ENCODE measurements at regions of chr15 and their contacts with region 1.

Region 1: DNA sequence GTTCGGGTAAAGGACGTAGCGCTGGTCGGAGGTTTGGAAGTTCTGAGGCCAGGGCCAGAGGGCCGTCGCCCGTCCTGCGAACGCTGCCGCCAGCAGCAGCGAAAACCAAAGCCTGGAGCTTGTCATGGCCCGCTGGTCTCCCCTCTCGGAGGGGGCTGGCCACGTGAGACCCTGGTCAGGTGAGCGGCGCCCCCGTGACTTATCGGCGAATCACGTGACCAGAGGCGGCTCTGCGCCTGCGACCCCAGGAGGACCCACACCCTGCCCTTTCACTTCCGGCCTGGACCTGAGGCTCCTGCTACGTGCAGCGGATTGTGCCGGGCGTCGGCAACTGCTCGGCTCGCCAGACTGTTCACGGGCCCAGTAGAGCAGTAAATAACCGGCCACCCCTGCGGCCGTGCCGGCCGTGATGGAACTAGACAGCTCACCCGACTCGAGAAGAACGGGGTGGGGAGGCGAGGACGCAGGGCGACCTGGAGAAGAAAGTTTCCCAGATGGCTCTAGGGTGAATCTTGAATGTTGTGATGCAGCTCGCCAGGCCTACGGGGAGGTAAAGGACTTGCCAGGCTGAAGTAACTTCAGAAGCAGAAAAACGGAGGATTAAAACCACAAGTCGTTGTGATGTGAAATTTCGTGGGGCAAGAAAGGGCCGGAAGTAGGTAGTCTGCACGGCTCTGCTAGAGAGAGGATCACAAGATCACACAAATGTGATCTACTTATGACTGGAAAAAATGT is at the start of gene HEXA:
- DNase-seq: peak; percentile 91 to 99 (median 95)
- ATAC-seq: peak; percentile 93
- H3K4me3 ChIP-seq: peak within 1 kb of the TSS; percentile 99
- H3K4me3 Mint-ChIP-seq: peak within 1 kb of the TSS; percentile 87 to 96 (median 93)
- H3K27ac ChIP-seq: peak within 1 kb of the TSS; percentile 75
- H3K27ac Mint-ChIP-seq: peak within 1 kb of the TSS; percentile 94 to 100 (median 96)
- H3K4me1 ChIP-seq: peaks cover 21 to 39% of the 10 kb centered on the region in 2 donors
- H3K4me1 Mint-ChIP-seq: peaks cover 39 to 85% (median 64%) of the 10 kb centered on the region in 7 donors
- H3K27me3 ChIP-seq: no peaks in the 10 kb centered on the region
- H3K27me3 Mint-ChIP-seq: no peaks in the 10 kb centered on the region
- total RNA-seq, gene HEXA: 83.1 to 101 (median 94.8) TPM

Region 2: DNA sequence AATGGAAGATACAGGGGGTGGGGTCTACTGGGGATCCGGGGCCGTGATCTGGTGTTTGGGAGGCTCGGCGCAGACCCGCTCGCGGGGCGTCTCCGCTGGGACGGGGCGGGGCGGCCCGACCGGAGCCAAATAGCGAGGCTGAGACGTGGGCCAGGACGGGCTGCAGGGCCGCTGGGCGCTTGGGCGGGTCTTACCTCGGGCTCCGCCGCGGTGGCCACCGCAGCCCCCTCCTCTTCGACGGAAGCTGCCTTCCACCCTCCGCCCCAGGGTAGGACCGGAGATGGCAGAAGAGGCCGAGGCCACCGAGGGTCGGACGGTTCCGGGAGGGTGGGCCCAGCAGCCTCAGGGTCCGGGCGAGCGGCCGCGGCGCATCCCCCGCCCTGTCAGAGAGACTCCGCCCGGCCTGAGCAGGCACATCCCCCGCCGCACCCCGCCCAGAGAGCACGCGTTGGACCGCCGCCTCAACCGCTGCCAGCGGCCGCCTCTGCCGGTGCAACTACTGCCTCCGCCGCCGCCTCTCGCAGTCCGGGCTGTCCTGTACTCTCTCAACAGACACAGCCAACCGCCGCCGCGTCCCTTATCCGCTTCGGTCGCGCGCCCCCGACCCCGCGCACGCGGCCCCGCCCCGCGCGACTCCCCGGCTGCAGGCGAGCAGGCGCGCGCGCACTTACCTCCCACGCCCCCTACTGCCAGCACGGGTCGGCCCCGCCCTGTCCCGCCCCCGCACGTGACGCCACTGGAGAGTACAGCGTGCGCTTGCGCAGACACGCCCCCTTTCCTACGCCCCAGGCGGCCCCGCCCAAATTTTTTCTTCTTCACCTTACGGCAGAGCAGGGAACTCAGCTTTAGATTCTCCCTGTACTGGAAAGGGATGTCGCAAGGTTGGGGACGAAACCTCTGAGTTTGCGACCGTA is 258.3 kb before region 1 on chr15 and contains the start of gene MYO9A:
- CTCF ChIA-PET with region 1: no interaction called
- POLR2A ChIA-PET with region 1: no interaction called
- intact Hi-C with region 1: loop called in 1 of 2 experiments (anchors 1 kb)
- DNase-seq: peak; percentile 93 to 99 (median 98)
- ATAC-seq: peak; percentile 90
- H3K4me3 ChIP-seq: peak within 1 kb of the TSS; percentile 86
- H3K4me3 Mint-ChIP-seq: peak within 1 kb of the TSS; percentile 89 to 99 (median 97)
- H3K27ac ChIP-seq: peak within 1 kb of the TSS; percentile 94
- H3K27ac Mint-ChIP-seq: peak within 1 kb of the TSS; percentile 81 to 99 (median 99)
- H3K4me1 ChIP-seq: peaks cover 7 to 11% of the 10 kb centered on the region in 2 donors
- H3K4me1 Mint-ChIP-seq: peaks cover 23 to 55% (median 47%) of the 10 kb centered on the region in 7 donors
- H3K27me3 ChIP-seq: no peaks in the 10 kb centered on the region
- H3K27me3 Mint-ChIP-seq: peaks cover 0 to 23% (median 0%) of the 10 kb centered on the region in 5 donors
- total RNA-seq, gene MYO9A: 21.6 to 53.3 (median 29.7) TPM

Region 3: DNA sequence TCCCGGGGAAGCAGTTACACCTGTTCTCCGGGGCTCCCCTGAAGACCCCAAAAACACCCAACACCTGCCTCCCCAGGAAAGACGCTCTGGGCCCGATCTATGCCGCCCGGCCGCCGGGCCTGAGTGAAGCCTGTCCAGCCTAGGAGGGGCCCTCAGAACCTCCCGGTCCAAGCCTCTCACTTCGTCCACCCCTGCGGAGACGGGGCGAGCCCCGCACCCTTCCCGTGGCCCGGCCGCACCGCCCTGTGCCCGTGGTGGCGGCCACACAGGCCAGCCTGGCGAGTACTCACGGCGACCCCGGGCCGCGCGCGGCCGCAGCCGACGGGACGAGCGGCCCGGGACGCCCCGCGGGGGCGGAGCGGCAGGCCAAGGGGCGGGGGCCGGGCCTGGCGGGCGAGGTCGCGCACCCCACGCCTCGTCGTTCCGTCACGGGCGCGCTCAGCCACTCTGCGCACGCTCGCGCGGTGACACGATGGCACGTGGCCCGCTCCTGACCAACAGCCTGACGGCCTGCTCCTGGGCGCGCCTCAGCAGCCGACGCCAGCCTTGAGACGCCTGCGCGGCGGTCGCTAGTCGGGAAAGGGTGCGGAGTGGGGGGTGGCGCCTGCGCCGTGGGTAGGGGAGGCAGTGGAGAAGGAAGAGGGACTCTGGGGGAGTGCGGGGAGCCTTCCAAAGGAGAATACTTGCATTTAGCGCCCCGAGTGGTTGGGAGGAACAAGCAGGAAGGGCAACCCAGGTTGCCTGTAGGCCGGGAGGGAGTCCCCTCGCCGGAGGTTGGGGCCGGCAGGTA is 103.6 kb before region 1 on chr15 and contains the start of gene PARP6:
- CTCF ChIA-PET with region 1: no interaction called
- POLR2A ChIA-PET with region 1: interaction called, 9 read pairs
- intact Hi-C with region 1: loop called (anchors 1 kb)
- DNase-seq: peak; percentile 94 to 100 (median 99)
- ATAC-seq: peak; percentile 96
- H3K4me3 ChIP-seq: peak within 1 kb of the TSS; percentile 71
- H3K4me3 Mint-ChIP-seq: peak within 1 kb of the TSS; percentile 87 to 95 (median 90)
- H3K27ac ChIP-seq: peak within 1 kb of the TSS; percentile 90
- H3K27ac Mint-ChIP-seq: peak within 1 kb of the TSS; percentile 87 to 96 (median 93)
- H3K4me1 ChIP-seq: peaks cover 18 to 25% of the 10 kb centered on the region in 2 donors
- H3K4me1 Mint-ChIP-seq: peaks cover 24 to 53% (median 44%) of the 10 kb centered on the region in 7 donors
- H3K27me3 ChIP-seq: no peaks in the 10 kb centered on the region
- H3K27me3 Mint-ChIP-seq: no peaks in the 10 kb centered on the region
- total RNA-seq, gene PARP6: 75.8 to 129 (median 127) TPM

Region 4: DNA sequence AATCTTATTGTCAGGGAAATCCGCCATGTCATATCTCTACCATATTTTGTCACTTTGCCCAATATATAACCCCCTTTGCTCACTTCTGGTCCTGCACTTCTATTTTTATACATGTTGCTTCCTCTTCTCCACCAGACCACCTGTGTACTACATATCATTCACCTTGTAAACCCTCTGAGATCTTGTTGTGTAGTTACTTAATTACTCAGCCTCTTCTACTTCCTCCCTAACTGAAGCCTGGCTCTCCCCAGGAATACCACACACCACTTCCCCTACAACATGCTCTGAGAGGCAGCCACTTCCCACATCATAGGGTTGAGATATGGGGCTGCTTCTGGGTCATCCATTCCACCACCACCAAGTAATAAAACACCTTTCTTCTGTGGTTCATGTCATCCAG is 10.2 kb before region 1 on chr15:
- CTCF ChIA-PET with region 1: no interaction called
- POLR2A ChIA-PET with region 1: interaction called, 7 read pairs
- intact Hi-C with region 1: loop called in 1 of 2 experiments (anchors 1 kb)
- DNase-seq: peak in 5 of 9 donors; percentile 11 to 39 (median 27)
- ATAC-seq: peak; percentile 81
- H3K4me3 ChIP-seq: no peak overlapping the region
- H3K4me3 Mint-ChIP-seq: peak overlapping the region in 9 of 10 donors; percentile 1 to 58 (median 18)
- H3K27ac ChIP-seq: no peak overlapping the region
- H3K27ac Mint-ChIP-seq: peak overlapping the region in 4 of 9 donors; percentile 6 to 44 (median 10)
- H3K4me1 ChIP-seq: peaks cover 0 to 18% of the 10 kb centered on the region in 2 donors
- H3K4me1 Mint-ChIP-seq: peaks cover 27 to 59% (median 46%) of the 10 kb centered on the region in 7 donors
- H3K27me3 ChIP-seq: no peaks in the 10 kb centered on the region
- H3K27me3 Mint-ChIP-seq: no peaks in the 10 kb centered on the region

Region 5: DNA sequence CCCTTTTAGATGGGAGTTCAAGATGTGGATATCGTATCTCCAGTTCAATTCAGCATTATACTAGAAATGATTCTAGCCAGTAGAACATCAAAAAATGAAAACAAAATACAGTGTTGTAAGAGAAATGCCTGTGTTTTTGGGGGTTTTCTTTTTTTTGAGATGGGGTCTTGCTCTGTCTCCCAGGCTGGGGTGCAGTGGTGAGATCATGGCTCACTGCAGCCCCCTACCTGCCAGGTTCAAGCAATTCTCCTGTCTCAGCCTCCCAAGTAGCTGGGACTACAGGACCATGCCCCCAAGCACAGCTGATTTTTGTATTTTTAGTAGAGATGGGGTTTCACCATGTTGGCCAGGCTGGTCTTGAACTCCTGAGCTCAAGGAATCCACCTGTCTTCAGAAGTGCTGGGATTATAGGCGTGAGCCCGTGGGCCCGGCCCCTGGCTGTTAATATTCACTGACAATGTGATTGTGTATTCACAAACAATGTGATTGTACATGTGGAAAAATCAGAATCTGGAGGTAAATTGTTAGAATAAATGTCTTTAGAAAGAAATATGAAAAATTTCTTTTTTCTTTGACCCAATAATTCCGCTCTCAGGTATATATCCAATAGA is 157.1 kb after region 1 on chr15:
- CTCF ChIA-PET with region 1: no interaction called
- POLR2A ChIA-PET with region 1: interaction called, 7 read pairs
- intact Hi-C with region 1: loop called in 1 of 2 experiments (anchors 1 kb)
- DNase-seq: peak in 7 of 9 donors; percentile 6 to 41 (median 30)
- ATAC-seq: peak; percentile 47
- H3K4me3 ChIP-seq: no peak overlapping the region
- H3K4me3 Mint-ChIP-seq: peak overlapping the region in 1 of 10 donors; percentile 58
- H3K27ac ChIP-seq: no peak overlapping the region
- H3K27ac Mint-ChIP-seq: peak overlapping the region in 1 of 9 donors; percentile 41
- H3K4me1 ChIP-seq: peaks cover 0 to 31% of the 10 kb centered on the region in 2 donors
- H3K4me1 Mint-ChIP-seq: peaks cover 27 to 87% (median 70%) of the 10 kb centered on the region in 7 donors
- H3K27me3 ChIP-seq: no peaks in the 10 kb centered on the region
- H3K27me3 Mint-ChIP-seq: no peaks in the 10 kb centered on the region

Region 6: GRCh38 chr15:72790302-72790910 is 414.4 kb after region 1 on chr15:
- CTCF ChIA-PET with region 1: no interaction called
- POLR2A ChIA-PET with region 1: no interaction called
- intact Hi-C with region 1: no loop called
- DNase-seq: no peak
- ATAC-seq: no peak
- H3K4me3 ChIP-seq: no peak overlapping the region
- H3K4me3 Mint-ChIP-seq: no peak overlapping the region
- H3K27ac ChIP-seq: no peak overlapping the region
- H3K27ac Mint-ChIP-seq: no peak overlapping the region
- H3K4me1 ChIP-seq: peaks cover 0 to 5% of the 10 kb centered on the region in 2 donors
- H3K4me1 Mint-ChIP-seq: peaks cover 0 to 17% (median 0%) of the 10 kb centered on the region in 7 donors
- H3K27me3 ChIP-seq: no peaks in the 10 kb centered on the region
- H3K27me3 Mint-ChIP-seq: peaks cover 0 to 11% (median 2%) of the 10 kb centered on the region in 5 donors

Region 7: GRCh38 chr15:73051811-73052678 is 676.0 kb after region 1 on chr15 and contains the start of gene NEO1:
- CTCF ChIA-PET with region 1: no interaction called
- POLR2A ChIA-PET with region 1: no interaction called
- intact Hi-C with region 1: loop called in 1 of 2 experiments (anchors 5 kb)
- DNase-seq: peak; percentile 71 to 86 (median 84)
- ATAC-seq: peak; percentile 90
- H3K4me3 ChIP-seq: peak within 1 kb of the TSS; percentile 74
- H3K4me3 Mint-ChIP-seq: peak within 1 kb of the TSS; percentile 81 to 95 (median 88)
- H3K27ac ChIP-seq: peak within 1 kb of the TSS; percentile 74
- H3K27ac Mint-ChIP-seq: peak within 1 kb of the TSS; percentile 36 to 88 (median 62)
- H3K4me1 ChIP-seq: peaks cover 8 to 11% of the 10 kb centered on the region in 2 donors
- H3K4me1 Mint-ChIP-seq: peaks cover 4 to 14% (median 11%) of the 10 kb centered on the region in 7 donors
- H3K27me3 ChIP-seq: no peaks in the 10 kb centered on the region
- H3K27me3 Mint-ChIP-seq: peaks cover 0 to 37% (median 0%) of the 10 kb centered on the region in 5 donors
- total RNA-seq, gene NEO1: 4.4 to 9.5 (median 6.9) TPM